ENCODE measurements at regions of chr1 and their contacts with region 1.

Region 1: DNA sequence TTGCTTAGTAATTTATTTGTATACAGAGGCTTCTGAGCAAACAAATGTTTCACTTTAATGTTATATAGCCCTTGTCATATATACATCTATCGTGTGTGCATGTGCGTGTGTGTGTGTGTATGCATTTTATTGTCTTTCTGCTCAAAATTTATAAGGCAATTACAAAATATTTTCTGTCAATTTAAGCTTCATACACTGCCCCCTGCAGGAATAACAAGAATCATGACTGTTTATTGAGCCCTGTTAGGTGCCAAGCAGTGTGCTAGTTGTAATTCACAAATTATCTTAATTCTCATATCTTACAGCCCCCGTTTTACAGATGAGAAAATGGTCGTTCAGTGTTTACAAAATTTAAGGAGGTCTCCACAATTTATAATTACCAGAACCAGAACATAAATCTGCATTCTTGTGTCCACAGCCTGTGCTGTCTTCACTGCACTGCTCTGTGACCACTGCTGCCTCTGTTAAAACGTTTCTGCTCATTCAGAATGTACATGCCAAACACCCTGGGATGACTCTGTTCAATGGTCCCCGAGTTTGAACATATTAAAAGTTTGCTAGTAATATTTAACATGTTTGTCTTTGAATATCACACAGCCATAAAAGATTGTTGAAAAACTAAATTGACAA is 181.3 kb downstream of the ATP6V1G3 start:
- DNase-seq: no peak
- ATAC-seq: peak; percentile 17

Region 2: GRCh38 chr1:198088360-198089071 is 270.6 kb before region 1 on chr1:
- intact Hi-C with region 1: loop called in 1 of 2 experiments (anchors 5 kb)
- DNase-seq: no peak
- ATAC-seq: no peak

Region 3: GRCh38 chr1:198307411-198307810 is 51.7 kb before region 1 on chr1:
- intact Hi-C with region 1: no loop called
- DNase-seq: no peak
- ATAC-seq: no peak